WTC11 (cell line): ENCODE measurements at regions of chr3 and their contacts with region 1.

Region 1: DNA sequence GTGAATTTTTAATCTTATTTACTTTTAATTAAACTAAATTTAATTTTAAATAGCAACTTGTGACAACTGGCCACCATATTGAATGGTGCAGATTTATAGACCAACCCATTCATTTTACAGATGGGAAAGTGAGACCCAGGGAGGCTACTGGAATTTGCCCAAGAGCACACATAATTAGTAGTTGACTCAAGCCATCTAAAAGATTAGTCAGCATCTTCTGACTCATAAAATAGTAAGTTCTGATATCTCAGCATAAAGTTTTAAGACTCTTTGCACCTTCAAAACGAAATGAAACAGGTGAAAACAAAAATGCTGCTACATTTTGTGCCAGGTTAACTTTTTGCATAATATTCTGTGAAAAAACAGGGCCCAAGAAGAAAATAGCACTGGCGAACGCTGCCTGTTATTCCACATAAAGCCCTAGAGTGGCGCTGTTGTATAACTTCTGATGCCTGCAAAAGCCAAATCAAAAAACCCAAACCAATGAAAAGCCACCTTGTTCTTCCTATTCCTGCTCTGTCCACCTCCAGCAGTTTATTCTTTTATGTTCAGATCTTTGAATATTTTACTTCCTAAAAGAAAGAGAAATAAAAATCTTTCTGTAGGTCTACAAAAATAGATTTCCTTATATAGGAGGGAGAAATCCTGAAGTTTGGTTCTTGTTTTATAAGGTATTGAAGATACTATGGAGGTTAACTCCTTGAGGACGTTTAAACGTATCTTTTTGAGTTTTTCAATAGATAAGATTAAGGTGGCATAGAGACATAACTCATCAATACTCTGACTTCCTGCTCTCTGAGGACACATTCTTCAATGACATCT is 62.8 kb downstream of the OTOL1 start:
- DNase-seq: peak; percentile 23
- ATAC-seq: peak; percentile 40; the same call in 1 of the 2 replicates
- H3K4me3 Mint-ChIP-seq: no peak overlapping the region
- H3K27ac Mint-ChIP-seq: no peak overlapping the region
- H3K4me1 Mint-ChIP-seq: peaks cover 16% of the 10 kb centered on the region
- H3K27me3 Mint-ChIP-seq: no peaks in the 10 kb centered on the region; the same call in 1 of the 2 replicates
- CTCF ChIP-seq: peak; percentile 90

Region 2: GRCh38 chr3:161700998-161701397 is 141.6 kb after region 1 on chr3:
- CTCF ChIA-PET with region 1: interaction called, 13 read pairs
- POLR2A ChIA-PET with region 1: no interaction called
- DNase-seq: peak; percentile 43
- ATAC-seq: peak; percentile 95
- H3K4me3 Mint-ChIP-seq: no peak overlapping the region
- H3K27ac Mint-ChIP-seq: no peak overlapping the region
- H3K4me1 Mint-ChIP-seq: peaks cover 3% of the 10 kb centered on the region; the same call in 1 of the 2 replicates
- H3K27me3 Mint-ChIP-seq: no peaks in the 10 kb centered on the region
- CTCF ChIP-seq: no peak